ENCODE measurements at regions of chr19 and their contacts with region 1.

Region 1: DNA sequence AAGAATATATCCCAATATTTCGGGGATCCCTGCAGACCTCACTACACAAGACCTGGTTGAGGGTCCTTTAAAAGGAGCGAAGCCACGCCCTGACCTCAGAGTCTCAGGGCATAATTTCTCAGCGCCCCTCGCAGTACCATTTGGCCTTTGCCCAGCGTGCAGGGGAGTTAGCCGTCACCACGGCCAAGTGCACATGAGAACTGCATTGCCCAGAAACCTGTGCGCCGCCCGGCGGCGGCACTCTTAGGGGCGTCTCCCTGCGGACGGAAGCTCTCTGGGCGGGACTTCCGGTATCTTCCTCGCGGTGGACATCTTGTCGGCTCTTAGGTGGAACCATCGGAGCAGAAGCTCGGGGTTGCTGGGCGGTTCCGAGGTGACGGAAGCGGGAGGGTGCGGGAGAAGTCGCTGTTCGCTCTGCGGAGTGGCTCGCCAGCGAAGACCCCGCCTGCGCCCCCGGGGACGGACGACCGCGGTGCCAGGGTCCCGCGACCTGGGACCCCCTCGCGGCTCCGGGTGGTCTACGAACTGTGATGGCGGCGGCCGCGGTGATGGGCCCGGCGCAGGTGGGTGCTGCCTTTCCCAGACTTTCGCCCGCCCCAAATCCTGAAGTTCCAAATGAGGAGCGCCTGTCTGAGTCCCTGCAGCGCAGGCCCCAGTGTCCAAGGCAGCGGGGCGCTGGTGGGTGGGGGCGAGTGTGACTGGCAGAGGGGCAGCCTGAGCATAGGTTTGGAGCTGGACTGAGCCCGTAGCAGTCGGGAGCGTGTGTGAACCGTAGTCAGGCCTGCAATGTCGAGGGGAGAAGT is at the start of gene ZNF134:
- DNase-seq: peak; percentile 82
- ATAC-seq: peak; percentile 99
- H3K4me3 Mint-ChIP-seq: peak within 1 kb of the TSS; percentile 93
- H3K27ac Mint-ChIP-seq: peak within 1 kb of the TSS; percentile 78
- H3K4me1 Mint-ChIP-seq: peaks cover 39% of the 10 kb centered on the region
- H3K27me3 Mint-ChIP-seq: no peaks in the 10 kb centered on the region
- CTCF ChIP-seq: no peak
- total RNA-seq, gene ZNF134: 32.3 and 38.4 TPM in 2 replicates

Region 2: GRCh38 chr19:57583521-57584416 is 30.4 kb before region 1 on chr19 and contains the start of gene ZIK1:
- CTCF ChIA-PET with region 1: no interaction called
- POLR2A ChIA-PET with region 1: interaction called, 9 read pairs
- intact Hi-C with region 1: loop called (anchors 1 kb)
- DNase-seq: peak; percentile 75
- ATAC-seq: peak; percentile 88
- H3K4me3 Mint-ChIP-seq: peak within 1 kb of the TSS; percentile 91
- H3K27ac Mint-ChIP-seq: peak within 1 kb of the TSS; percentile 87
- H3K4me1 Mint-ChIP-seq: peaks cover 27% of the 10 kb centered on the region
- H3K27me3 Mint-ChIP-seq: no peaks in the 10 kb centered on the region
- CTCF ChIP-seq: no peak
- total RNA-seq, gene ZIK1: 16.2 and 18.1 TPM in 2 replicates

Region 3: DNA sequence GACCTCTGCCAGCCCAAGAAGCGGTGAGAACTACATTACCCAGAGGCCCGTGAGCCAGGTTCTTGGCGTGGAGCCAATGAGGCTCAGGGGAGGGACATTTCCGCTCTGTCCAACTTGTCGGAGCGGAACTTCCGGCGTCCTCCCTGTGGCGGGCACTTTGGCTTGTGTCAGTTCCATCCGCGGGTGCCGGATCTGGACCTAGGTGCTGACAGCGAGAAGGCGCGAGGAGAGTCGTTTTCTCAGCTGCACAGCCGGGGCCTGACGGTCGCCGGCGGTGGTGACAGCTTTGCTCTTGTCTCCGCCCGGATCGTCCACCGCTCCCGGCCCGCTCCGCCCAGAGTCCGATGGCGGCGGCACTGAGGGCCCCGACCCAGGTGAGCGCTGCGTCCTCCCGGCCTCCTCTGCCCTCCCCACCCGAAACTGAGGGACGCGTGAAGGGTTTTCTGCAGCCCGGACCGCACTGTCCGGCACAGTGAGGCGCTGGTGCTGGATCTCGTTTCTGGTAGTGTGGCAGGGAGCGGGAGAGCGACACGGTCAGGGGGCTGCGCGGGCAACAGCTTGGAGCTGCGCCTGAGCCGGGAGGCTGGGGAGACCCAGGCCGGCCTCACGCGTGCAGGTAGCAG is 14.3 kb before region 1 on chr19 and contains the start of gene ZNF530:
- CTCF ChIA-PET with region 1: no interaction called
- POLR2A ChIA-PET with region 1: interaction called, 3 read pairs
- intact Hi-C with region 1: loop called (anchors 1 kb)
- DNase-seq: peak; percentile 77
- ATAC-seq: peak; percentile 98
- H3K4me3 Mint-ChIP-seq: peak within 1 kb of the TSS; percentile 90
- H3K27ac Mint-ChIP-seq: peak within 1 kb of the TSS; percentile 84
- H3K4me1 Mint-ChIP-seq: peaks cover 19% of the 10 kb centered on the region
- H3K27me3 Mint-ChIP-seq: peaks cover 4% of the 10 kb centered on the region
- CTCF ChIP-seq: no peak
- total RNA-seq, gene ZNF530: 7.0 and 7.9 TPM in 2 replicates

Region 4: GRCh38 chr19:57632987-57633831 is 19.1 kb after region 1 on chr19 and contains the start of gene ZNF211:
- CTCF ChIA-PET with region 1: no interaction called
- POLR2A ChIA-PET with region 1: interaction called, 20 read pairs
- intact Hi-C with region 1: loop called (anchors 1 kb)
- DNase-seq: peak; percentile 81
- ATAC-seq: peak; percentile 100
- H3K4me3 Mint-ChIP-seq: peak within 1 kb of the TSS; percentile 94
- H3K27ac Mint-ChIP-seq: peak within 1 kb of the TSS; percentile 87
- H3K4me1 Mint-ChIP-seq: peaks cover 19% of the 10 kb centered on the region
- H3K27me3 Mint-ChIP-seq: no peaks in the 10 kb centered on the region
- CTCF ChIP-seq: no peak
- total RNA-seq, gene ZNF211: 22.0 and 26.0 TPM in 2 replicates

Region 5: GRCh38 chr19:57934820-57935665 is 320.9 kb after region 1 on chr19 and contains the start of gene ZNF418:
- CTCF ChIA-PET with region 1: no interaction called
- POLR2A ChIA-PET with region 1: no interaction called
- intact Hi-C with region 1: loop called (anchors 1 kb)
- DNase-seq: peak; percentile 40
- ATAC-seq: peak; percentile 99
- H3K4me3 Mint-ChIP-seq: peak within 1 kb of the TSS; percentile 96
- H3K27ac Mint-ChIP-seq: peak within 1 kb of the TSS; percentile 86
- H3K4me1 Mint-ChIP-seq: peaks cover 16% of the 10 kb centered on the region
- H3K27me3 Mint-ChIP-seq: no peaks in the 10 kb centered on the region
- CTCF ChIP-seq: no peak
- total RNA-seq, gene ZNF418: 21.3 and 26.5 TPM in 2 replicates